ENCODE measurements at regions of chr16 and their contacts with region 1.

Region 1: DNA sequence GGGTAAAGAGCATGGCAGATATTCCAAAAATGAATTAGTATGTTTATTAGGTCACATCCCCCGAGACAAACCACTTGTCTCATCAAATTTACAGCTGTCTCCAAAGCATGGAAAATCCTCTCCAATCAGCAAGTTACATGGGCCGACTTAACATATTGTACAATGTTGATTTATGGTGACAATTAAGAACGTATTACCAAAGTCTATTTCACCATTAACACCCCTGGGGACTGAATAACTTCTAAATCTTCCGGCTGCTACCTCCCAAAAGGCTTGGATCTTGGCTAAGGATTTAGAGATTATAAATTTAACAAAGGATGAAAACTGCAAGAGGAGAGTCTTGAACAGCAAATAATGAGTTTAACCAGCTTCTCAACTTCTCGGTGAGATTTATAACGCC is 311.9 kb downstream of the NPIPA8 start:
- DNase-seq: no peak
- H3K4me3 ChIP-seq: no peak overlapping the region
- H3K27ac ChIP-seq: no peak overlapping the region
- H3K4me1 ChIP-seq: no peaks in the 10 kb centered on the region
- H3K27me3 ChIP-seq: no peaks in the 10 kb centered on the region
- CTCF ChIP-seq: no peak
- EP300 ChIP-seq: no peak
- POLR2A ChIP-seq: no peak

Region 2: DNA sequence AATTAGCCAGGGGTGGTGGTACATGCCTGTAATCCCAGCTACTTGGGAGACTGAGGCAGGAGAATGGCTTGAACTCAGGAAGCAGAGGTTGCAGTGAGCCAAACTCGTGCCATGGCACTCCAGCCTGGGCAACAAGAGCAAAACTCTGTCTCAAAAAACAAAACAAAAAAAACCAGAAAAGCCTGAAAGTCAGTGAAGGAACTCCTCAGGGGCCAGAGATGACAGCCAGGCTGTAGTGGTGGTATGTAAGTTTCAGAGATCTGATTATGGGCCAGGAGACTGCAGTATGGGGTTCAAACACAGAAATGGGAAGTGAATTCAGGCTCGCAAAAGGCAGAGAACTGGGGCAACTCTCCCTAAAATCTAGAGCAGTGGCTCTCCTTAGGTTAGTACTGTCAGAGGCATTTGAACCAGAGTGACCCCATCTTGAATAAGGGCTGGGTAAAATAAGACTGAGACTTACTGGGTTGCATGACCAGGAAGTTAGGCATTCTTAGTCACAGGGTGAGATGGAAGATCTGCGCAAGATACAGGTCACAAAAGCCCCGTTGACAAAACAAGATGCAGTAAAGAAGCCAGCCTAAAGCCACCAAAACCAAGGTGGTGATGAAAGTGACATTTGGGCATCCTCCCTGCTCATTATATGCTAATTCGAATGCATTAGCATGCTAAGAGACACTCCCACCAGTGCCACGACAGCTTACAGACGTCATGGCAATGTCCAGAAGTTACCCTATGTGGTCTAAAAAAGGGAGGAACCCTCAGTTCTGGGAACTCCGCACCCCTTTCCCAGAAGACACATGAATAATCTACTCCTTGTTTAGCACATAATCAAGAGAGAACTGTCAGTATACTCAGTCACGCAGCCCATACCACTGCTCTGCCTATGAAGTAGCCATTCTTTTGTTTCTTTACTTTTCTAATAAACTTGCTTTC is 433.6 kb before region 1 on chr16:
- intact Hi-C with region 1: no loop called
- DNase-seq: no peak
- H3K4me3 ChIP-seq: no peak overlapping the region
- H3K27ac ChIP-seq: no peak overlapping the region
- H3K4me1 ChIP-seq: no peaks in the 10 kb centered on the region
- H3K27me3 ChIP-seq: no peaks in the 10 kb centered on the region
- CTCF ChIP-seq: no peak
- EP300 ChIP-seq: no peak
- POLR2A ChIP-seq: no peak

Region 3: DNA sequence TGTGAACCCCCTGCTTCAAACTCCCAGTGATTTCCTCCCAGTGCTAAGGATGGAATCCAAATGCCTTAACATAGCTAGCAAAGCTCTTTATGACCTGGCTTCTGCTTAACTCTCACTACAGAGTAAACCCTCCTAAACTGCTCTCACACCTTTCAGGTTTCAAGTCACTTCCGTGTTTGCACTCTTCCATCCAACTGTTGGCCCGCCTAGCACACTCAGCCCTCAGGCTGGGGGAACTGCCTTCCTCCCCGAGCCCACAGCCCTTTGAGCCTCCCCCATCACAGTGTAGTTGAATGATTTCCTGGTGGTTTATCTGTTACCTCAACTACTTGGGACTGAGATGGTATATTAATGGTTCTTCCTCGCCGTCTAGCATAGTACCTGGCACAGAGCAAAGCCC is 30.6 kb before region 1 on chr16:
- intact Hi-C with region 1: loop called in 1 of 4 experiments (anchors 1 kb)
- DNase-seq: no peak
- H3K4me3 ChIP-seq: no peak overlapping the region
- H3K27ac ChIP-seq: no peak overlapping the region
- H3K4me1 ChIP-seq: no peaks in the 10 kb centered on the region
- H3K27me3 ChIP-seq: no peaks in the 10 kb centered on the region
- CTCF ChIP-seq: no peak
- EP300 ChIP-seq: no peak
- POLR2A ChIP-seq: no peak

Region 4: GRCh38 chr16:18048853-18049546 is 24.4 kb after region 1 on chr16:
- intact Hi-C with region 1: no loop called
- DNase-seq: no peak
- H3K4me3 ChIP-seq: no peak overlapping the region
- H3K27ac ChIP-seq: no peak overlapping the region
- H3K4me1 ChIP-seq: no peaks in the 10 kb centered on the region
- H3K27me3 ChIP-seq: no peaks in the 10 kb centered on the region
- CTCF ChIP-seq: no peak
- EP300 ChIP-seq: no peak
- POLR2A ChIP-seq: no peak

Measured in ovary (tissue), 10 donors.